CD4-positive, alpha-beta T cell (primary cell): ENCODE measurements at regions of chr4 and their contacts with region 1.

Region 1: GRCh38 chr4:24533364-24533763 is 51.0 kb downstream of the DHX15 start:
- DNase-seq: no peak
- ATAC-seq: no peak
- H3K4me3 ChIP-seq: no peak overlapping the region
- H3K4me3 Mint-ChIP-seq: no peak overlapping the region
- H3K27ac ChIP-seq: no peak overlapping the region
- H3K27ac Mint-ChIP-seq: no peak overlapping the region
- H3K4me1 ChIP-seq: no peaks in the 10 kb centered on the region
- H3K4me1 Mint-ChIP-seq: peaks cover 12% of the 10 kb centered on the region
- H3K27me3 ChIP-seq: no peaks in the 10 kb centered on the region
- H3K27me3 Mint-ChIP-seq: no peaks in the 10 kb centered on the region
- CTCF ChIP-seq: no peak

Region 2: GRCh38 chr4:24298911-24299310 is 234.5 kb before region 1 on chr4:
- CTCF ChIA-PET with region 1: no interaction called
- POLR2A ChIA-PET with region 1: no interaction called
- intact Hi-C with region 1: no loop called
- DNase-seq: no peak
- ATAC-seq: no peak
- H3K4me3 ChIP-seq: no peak overlapping the region
- H3K4me3 Mint-ChIP-seq: no peak overlapping the region
- H3K27ac ChIP-seq: no peak overlapping the region
- H3K27ac Mint-ChIP-seq: no peak overlapping the region
- H3K4me1 ChIP-seq: no peaks in the 10 kb centered on the region
- H3K4me1 Mint-ChIP-seq: no peaks in the 10 kb centered on the region
- H3K27me3 ChIP-seq: no peaks in the 10 kb centered on the region
- H3K27me3 Mint-ChIP-seq: no peaks in the 10 kb centered on the region
- CTCF ChIP-seq: no peak

Region 3: GRCh38 chr4:24519649-24520048 is 13.7 kb before region 1 on chr4:
- CTCF ChIA-PET with region 1: no interaction called
- POLR2A ChIA-PET with region 1: no interaction called
- intact Hi-C with region 1: no loop called
- DNase-seq: no peak
- ATAC-seq: no peak
- H3K4me3 ChIP-seq: no peak overlapping the region
- H3K4me3 Mint-ChIP-seq: no peak overlapping the region
- H3K27ac ChIP-seq: no peak overlapping the region
- H3K27ac Mint-ChIP-seq: no peak overlapping the region
- H3K4me1 ChIP-seq: no peaks in the 10 kb centered on the region
- H3K4me1 Mint-ChIP-seq: peaks cover 15% of the 10 kb centered on the region
- H3K27me3 ChIP-seq: no peaks in the 10 kb centered on the region
- H3K27me3 Mint-ChIP-seq: no peaks in the 10 kb centered on the region
- CTCF ChIP-seq: no peak

Region 4: DNA sequence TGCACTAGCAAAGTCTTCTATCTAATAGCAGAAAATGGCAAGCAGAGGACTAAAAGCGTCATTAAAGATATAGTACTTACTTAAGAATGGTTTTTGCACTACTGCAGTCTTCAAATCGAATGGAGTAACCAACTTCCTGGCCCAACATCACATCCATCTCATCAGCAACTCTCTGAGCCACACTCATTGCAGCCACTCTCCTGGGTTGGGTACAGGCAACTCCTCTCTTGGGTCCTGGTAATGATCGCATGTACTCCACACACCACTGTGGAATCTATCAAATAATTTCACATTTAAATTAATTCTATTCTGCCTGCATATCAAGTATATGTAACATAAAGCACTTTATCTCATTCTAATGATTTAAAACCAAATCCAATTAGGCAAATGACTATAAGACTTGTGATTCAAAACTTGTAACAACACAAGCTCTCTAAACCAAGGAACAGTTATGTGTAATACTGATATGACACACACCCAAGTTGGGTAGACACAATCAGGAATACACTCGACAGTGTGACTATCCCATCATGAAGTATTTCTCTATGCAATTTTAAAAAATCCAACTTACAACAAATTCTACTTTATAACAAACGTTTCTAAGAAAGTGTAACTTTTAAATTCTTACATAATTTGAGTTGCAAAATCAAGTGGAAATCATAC is 37.3 kb after region 1 on chr4:
- CTCF ChIA-PET with region 1: no interaction called
- POLR2A ChIA-PET with region 1: no interaction called
- intact Hi-C with region 1: loop called in 1 of 2 experiments (anchors 5 kb)
- DNase-seq: no peak
- ATAC-seq: no peak
- H3K4me3 ChIP-seq: no peak overlapping the region
- H3K4me3 Mint-ChIP-seq: peak overlapping the region; percentile 17
- H3K27ac ChIP-seq: no peak overlapping the region
- H3K27ac Mint-ChIP-seq: peak overlapping the region; percentile 60
- H3K4me1 ChIP-seq: peaks cover 23% of the 10 kb centered on the region
- H3K4me1 Mint-ChIP-seq: peaks cover 89% of the 10 kb centered on the region
- H3K27me3 ChIP-seq: no peaks in the 10 kb centered on the region
- H3K27me3 Mint-ChIP-seq: no peaks in the 10 kb centered on the region
- CTCF ChIP-seq: no peak

Region 5: DNA sequence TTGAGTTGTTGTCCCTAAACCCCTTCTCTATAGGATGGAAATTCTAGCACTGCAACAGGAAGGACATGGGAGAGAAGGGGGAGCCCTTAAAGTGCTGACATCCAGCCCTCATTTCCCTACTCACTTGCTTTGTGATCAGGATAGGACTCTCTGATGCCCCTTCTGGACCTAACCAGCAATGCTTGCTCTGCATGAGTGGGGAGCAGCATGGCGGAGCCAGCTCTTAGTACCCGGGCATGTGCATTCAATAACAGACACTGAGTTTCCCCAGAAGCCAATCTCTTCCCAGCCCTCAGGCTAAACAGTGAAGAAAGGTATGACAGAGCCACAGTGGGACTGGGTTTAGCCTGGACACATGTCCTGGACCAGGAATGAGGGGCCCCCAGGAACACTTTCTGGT is 276.0 kb after region 1 on chr4:
- CTCF ChIA-PET with region 1: no interaction called
- POLR2A ChIA-PET with region 1: no interaction called
- intact Hi-C with region 1: no loop called
- DNase-seq: no peak
- ATAC-seq: no peak
- H3K4me3 ChIP-seq: no peak overlapping the region
- H3K4me3 Mint-ChIP-seq: no peak overlapping the region
- H3K27ac ChIP-seq: no peak overlapping the region
- H3K27ac Mint-ChIP-seq: no peak overlapping the region
- H3K4me1 ChIP-seq: no peaks in the 10 kb centered on the region
- H3K4me1 Mint-ChIP-seq: no peaks in the 10 kb centered on the region
- H3K27me3 ChIP-seq: no peaks in the 10 kb centered on the region
- H3K27me3 Mint-ChIP-seq: no peaks in the 10 kb centered on the region
- CTCF ChIP-seq: no peak